CD8-positive, alpha-beta memory T cell (primary cell): ENCODE measurements at regions of chr11 and their contacts with region 1.

Region 1: GRCh38 chr11:2992234-2992996 is at the start of gene NAP1L4:
- DNase-seq: peak; percentile 94 to 98 (median 95)
- H3K4me3 ChIP-seq: peak within 1 kb of the TSS; percentile 85
- H3K4me3 Mint-ChIP-seq: peak within 1 kb of the TSS; percentile 99 to 100 (median 99)
- H3K27ac ChIP-seq: peak within 1 kb of the TSS; percentile 86
- H3K27ac Mint-ChIP-seq: peak within 1 kb of the TSS; percentile 97 to 100 (median 98)
- H3K4me1 ChIP-seq: peaks cover 20% of the 10 kb centered on the region
- H3K4me1 Mint-ChIP-seq: peaks cover 31 to 36% (median 32%) of the 10 kb centered on the region in 3 donors
- H3K27me3 ChIP-seq: no peaks in the 10 kb centered on the region
- H3K27me3 Mint-ChIP-seq: peaks cover 0 to 3% of the 10 kb centered on the region in 2 donors
- total RNA-seq, gene NAP1L4: 273 to 280 TPM

Region 2: GRCh38 chr11:3006505-3007183 is 14.2 kb after region 1 on chr11:
- CTCF ChIA-PET with region 1: interaction called, 6 read pairs
- POLR2A ChIA-PET with region 1: interaction called, 13 read pairs
- DNase-seq: peak in 3 of 5 donors; percentile 9 to 81 (median 74)
- H3K4me3 ChIP-seq: no peak overlapping the region
- H3K4me3 Mint-ChIP-seq: peak overlapping the region; percentile 28 to 85 (median 80)
- H3K27ac ChIP-seq: no peak overlapping the region
- H3K27ac Mint-ChIP-seq: peak overlapping the region in 2 of 8 donors; percentile 66 to 74
- H3K4me1 ChIP-seq: no peaks in the 10 kb centered on the region
- H3K4me1 Mint-ChIP-seq: peaks cover 0 to 72% (median 36%) of the 10 kb centered on the region in 3 donors
- H3K27me3 ChIP-seq: no peaks in the 10 kb centered on the region
- H3K27me3 Mint-ChIP-seq: no peaks in the 10 kb centered on the region

Region 3: GRCh38 chr11:3014057-3014938 is 21.9 kb after region 1 on chr11:
- CTCF ChIA-PET with region 1: interaction called, 43 read pairs
- POLR2A ChIA-PET with region 1: interaction called, 54 read pairs
- DNase-seq: peak; percentile 53 to 95 (median 88)
- H3K4me3 ChIP-seq: peak overlapping the region; percentile 58
- H3K4me3 Mint-ChIP-seq: peak overlapping the region; percentile 6 to 76 (median 71)
- H3K27ac ChIP-seq: no peak overlapping the region
- H3K27ac Mint-ChIP-seq: peak overlapping the region; percentile 74 to 91 (median 88)
- H3K4me1 ChIP-seq: peaks cover 45% of the 10 kb centered on the region
- H3K4me1 Mint-ChIP-seq: peaks cover 28 to 81% (median 57%) of the 10 kb centered on the region in 3 donors
- H3K27me3 ChIP-seq: no peaks in the 10 kb centered on the region
- H3K27me3 Mint-ChIP-seq: no peaks in the 10 kb centered on the region